ENCODE measurements at regions of chr1 and their contacts with region 1.

Region 1: DNA sequence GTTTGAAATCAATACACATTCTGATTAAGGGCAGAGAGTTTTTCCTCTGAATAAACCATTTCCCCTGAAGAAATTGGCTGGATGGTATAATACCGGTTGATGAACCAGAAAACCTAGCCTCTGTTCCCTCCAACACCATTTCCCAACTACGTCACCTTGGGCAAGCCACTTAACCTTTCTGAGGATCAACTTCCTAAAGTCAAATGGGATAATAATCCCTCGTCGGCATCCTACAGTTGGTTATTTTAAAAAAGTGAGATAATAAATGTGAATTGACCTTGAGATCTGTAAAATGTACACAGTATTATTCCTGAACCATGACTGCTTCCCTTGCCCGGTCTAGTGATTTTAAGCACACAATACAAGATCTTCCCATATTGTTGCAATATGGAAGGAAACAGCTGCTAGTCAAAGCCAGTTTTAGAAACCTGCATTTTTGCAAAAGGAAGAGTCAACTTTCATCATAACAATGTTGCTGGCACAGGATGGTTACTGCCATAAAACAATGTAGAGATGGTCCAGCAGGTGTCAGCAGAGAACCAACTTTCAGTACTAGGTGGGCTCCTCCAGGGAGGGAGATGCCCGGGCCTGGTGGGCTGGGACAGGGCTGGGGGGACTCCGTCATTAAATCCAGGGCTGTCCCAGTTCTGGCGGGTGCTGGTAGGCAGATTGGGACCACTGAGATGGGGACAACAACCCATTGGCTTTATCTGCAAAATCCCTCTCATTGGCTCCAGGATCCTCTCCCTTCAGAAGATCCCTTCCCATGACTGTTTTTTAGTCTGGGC is 5.2 kb upstream of the HLX start:
- DNase-seq: peak; percentile 66
- ATAC-seq: peak; percentile 43
- H3K4me3 ChIP-seq: no peak overlapping the region
- H3K27ac ChIP-seq: no peak overlapping the region
- H3K4me1 ChIP-seq: no peaks in the 10 kb centered on the region
- H3K27me3 ChIP-seq: no peaks in the 10 kb centered on the region
- CTCF ChIP-seq: peak; percentile 76
- POLR2A ChIP-seq: no peak
- RAD21 ChIP-seq: peak; percentile 82

Region 2: GRCh38 chr1:220810179-220810653 is 63.8 kb before region 1 on chr1:
- CTCF ChIA-PET with region 1: interaction called, 6 read pairs
- POLR2A ChIA-PET with region 1: no interaction called
- dilution Hi-C with region 1: no loop called
- in situ Hi-C with region 1: no loop called
- intact Hi-C with region 1: loop called (anchors 1 kb)
- DNase-seq: peak; percentile 78
- ATAC-seq: peak; percentile 99
- H3K4me3 ChIP-seq: no peak overlapping the region
- H3K27ac ChIP-seq: no peak overlapping the region
- H3K4me1 ChIP-seq: peaks cover under 1% of the 10 kb centered on the region; the same call in 1 of the 2 replicates
- H3K27me3 ChIP-seq: peaks cover 6% of the 10 kb centered on the region; the same call in 1 of the 2 replicates
- CTCF ChIP-seq: peak; percentile 91
- POLR2A ChIP-seq: no peak
- RAD21 ChIP-seq: peak; percentile 78

Region 3: DNA sequence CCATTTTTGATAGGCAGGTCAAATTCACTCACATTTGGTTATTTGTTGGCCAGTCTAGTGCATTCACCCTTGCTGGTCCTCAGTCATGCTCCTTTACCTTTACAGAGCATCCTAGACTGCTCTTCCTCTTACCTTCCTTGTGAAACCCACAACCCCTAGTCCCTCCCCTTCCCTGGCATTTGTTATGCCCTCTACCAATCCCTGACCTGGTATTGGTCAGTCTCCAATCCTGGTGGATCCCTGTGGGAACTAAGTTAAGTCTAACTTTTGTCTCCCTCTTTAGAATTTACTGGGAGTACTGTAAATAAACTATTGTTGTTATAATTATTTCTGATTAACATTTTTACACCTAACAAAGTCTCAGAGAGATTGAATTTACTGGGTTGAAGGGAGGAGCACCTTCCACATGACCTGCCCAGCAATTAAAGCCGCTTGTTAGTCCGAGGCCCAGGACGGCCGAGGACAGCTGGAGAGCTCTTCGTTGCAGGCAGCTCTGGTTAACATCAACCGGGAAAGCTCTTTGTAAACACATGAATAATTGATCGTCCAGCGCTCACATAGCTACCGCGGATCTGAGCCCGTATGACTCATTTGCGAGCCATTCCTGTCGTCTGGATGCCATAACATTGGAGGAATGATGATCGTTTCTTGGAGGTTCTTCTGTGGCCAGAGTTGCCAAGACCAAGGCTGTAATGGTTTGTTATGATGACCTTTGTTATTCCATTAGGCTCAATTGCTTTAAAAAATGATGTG is 55.5 kb before region 1 on chr1:
- CTCF ChIA-PET with region 1: no interaction called
- POLR2A ChIA-PET with region 1: no interaction called
- dilution Hi-C with region 1: no loop called
- in situ Hi-C with region 1: no loop called
- intact Hi-C with region 1: loop called (anchors 2 kb)
- DNase-seq: peak; percentile 98
- ATAC-seq: peak; percentile 91
- H3K4me3 ChIP-seq: no peak overlapping the region
- H3K27ac ChIP-seq: peak overlapping the region; percentile 74; the same call in 1 of the 2 replicates
- H3K4me1 ChIP-seq: peaks cover 12% of the 10 kb centered on the region
- H3K27me3 ChIP-seq: peaks cover 11% of the 10 kb centered on the region
- CTCF ChIP-seq: no peak
- POLR2A ChIP-seq: no peak
- RAD21 ChIP-seq: no peak

Region 4: GRCh38 chr1:221263831-221264767 is 390.0 kb after region 1 on chr1:
- CTCF ChIA-PET with region 1: interaction called, 3 read pairs
- POLR2A ChIA-PET with region 1: no interaction called
- dilution Hi-C with region 1: no loop called
- in situ Hi-C with region 1: no loop called
- intact Hi-C with region 1: loop called (anchors 2 kb)
- DNase-seq: peak; percentile 89
- ATAC-seq: peak; percentile 81
- H3K4me3 ChIP-seq: no peak overlapping the region
- H3K27ac ChIP-seq: no peak overlapping the region
- H3K4me1 ChIP-seq: peaks cover 2% of the 10 kb centered on the region; the same call in 1 of the 2 replicates
- H3K27me3 ChIP-seq: no peaks in the 10 kb centered on the region
- CTCF ChIP-seq: peak; percentile 68
- POLR2A ChIP-seq: no peak
- RAD21 ChIP-seq: peak; percentile 77

Region 5: GRCh38 chr1:221335161-221336101 is 461.4 kb after region 1 on chr1:
- CTCF ChIA-PET with region 1: no interaction called
- POLR2A ChIA-PET with region 1: no interaction called
- dilution Hi-C with region 1: no loop called
- in situ Hi-C with region 1: no loop called
- intact Hi-C with region 1: loop called (anchors 1 kb)
- DNase-seq: peak; percentile 69
- ATAC-seq: peak; percentile 79
- H3K4me3 ChIP-seq: no peak overlapping the region
- H3K27ac ChIP-seq: peak overlapping the region; percentile 85
- H3K4me1 ChIP-seq: peaks cover 15% of the 10 kb centered on the region
- H3K27me3 ChIP-seq: no peaks in the 10 kb centered on the region
- CTCF ChIP-seq: no peak
- POLR2A ChIP-seq: no peak
- RAD21 ChIP-seq: no peak

Region 6: GRCh38 chr1:222171005-222171404 is 1296.9 kb after region 1 on chr1:
- CTCF ChIA-PET with region 1: no interaction called
- POLR2A ChIA-PET with region 1: no interaction called
- dilution Hi-C with region 1: no loop called
- in situ Hi-C with region 1: no loop called
- intact Hi-C with region 1: loop called (anchors 5 kb)
- DNase-seq: peak; percentile 70
- ATAC-seq: peak; percentile 68
- H3K4me3 ChIP-seq: no peak overlapping the region
- H3K27ac ChIP-seq: no peak overlapping the region
- H3K4me1 ChIP-seq: peaks cover 2% of the 10 kb centered on the region
- H3K27me3 ChIP-seq: no peaks in the 10 kb centered on the region
- CTCF ChIP-seq: peak; percentile 58
- POLR2A ChIP-seq: no peak
- RAD21 ChIP-seq: peak; percentile 76

Measured in IMR-90 (cell line).